ENCODE measurements at regions of chr4 and their contacts with region 1.

Region 1: GRCh38 chr4:83535520-83536361 is at the start of gene GPAT3:
- DNase-seq: peak; percentile 78 to 86
- ATAC-seq: peak; percentile 90 to 94
- H3K4me3 ChIP-seq: peak within 1 kb of the TSS; percentile 81
- H3K27ac ChIP-seq: peak within 1 kb of the TSS; percentile 90 to 96
- H3K4me1 ChIP-seq: peaks cover 23% of the 10 kb centered on the region; the same call in 2 of the 3 replicates
- CTCF ChIP-seq: no peak
- EP300 ChIP-seq: peak in 1 of 2 experiments; percentile 46; a peak in 2 of 5 replicates
- POLR2A ChIP-seq: no peak; the same call in none of the 2 replicates
- RAD21 ChIP-seq: no peak; a peak in 1 of 5 replicates
- polyA plus RNA-seq, gene GPAT3: 29.9 and 44.9 TPM in 2 replicates

Region 2: DNA sequence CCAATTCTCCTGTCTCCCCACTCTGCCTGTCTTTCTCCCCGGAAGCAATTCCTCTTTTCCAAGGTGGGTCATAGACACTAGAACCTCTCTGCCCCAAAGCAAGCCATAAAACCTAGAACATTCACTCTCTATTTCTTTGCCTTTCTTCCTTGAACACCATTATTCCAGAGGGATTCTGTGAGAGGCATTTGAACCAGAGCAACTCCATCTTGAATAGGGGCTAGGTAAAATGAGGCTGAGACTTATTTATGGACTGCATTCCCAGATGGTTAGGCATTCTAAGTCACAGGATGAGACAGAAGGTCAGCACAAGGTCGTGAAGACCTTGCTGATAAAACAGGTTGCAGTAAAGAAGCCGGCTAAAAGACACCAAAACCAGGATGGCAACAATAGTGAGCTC is 13.5 kb before region 1 on chr4:
- CTCF ChIA-PET with region 1: interaction called, 10 read pairs
- POLR2A ChIA-PET with region 1: no interaction called
- DNase-seq: no peak
- ATAC-seq: no peak
- H3K4me3 ChIP-seq: no peak overlapping the region
- H3K27ac ChIP-seq: no peak overlapping the region
- H3K4me1 ChIP-seq: no peaks in the 10 kb centered on the region
- CTCF ChIP-seq: no peak
- EP300 ChIP-seq: no peak
- POLR2A ChIP-seq: no peak
- RAD21 ChIP-seq: no peak

Region 3: DNA sequence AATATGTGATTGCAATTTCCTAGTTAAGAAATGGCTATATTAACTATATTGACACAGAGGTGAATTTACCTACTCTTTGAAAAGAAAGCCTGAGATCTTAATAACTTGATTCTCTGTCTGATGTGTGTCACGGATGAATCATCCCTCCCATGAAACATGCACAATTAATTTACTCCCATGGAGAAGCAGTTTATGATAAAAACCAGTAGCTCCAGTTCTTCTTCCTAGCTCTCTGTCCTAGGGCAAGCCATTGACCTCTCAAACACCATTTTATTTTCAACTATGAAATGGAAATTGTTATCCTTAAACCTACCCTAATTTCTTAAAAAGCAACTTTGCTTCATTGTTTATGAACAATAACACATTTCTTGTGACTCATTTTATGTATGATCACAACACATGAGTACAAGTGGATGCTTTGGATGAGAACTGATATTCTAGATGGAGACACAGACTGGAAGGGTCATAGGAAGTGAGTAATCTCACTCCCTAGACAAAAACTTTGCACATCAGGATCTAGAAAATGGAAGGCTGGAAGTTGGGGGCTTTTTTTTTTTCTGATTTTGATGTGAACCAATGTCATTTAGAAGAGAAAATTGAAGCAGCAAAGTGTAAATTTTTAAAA is 438.5 kb after region 1 on chr4:
- CTCF ChIA-PET with region 1: no interaction called
- POLR2A ChIA-PET with region 1: no interaction called
- DNase-seq: no peak
- ATAC-seq: no peak
- H3K4me3 ChIP-seq: no peak overlapping the region
- H3K27ac ChIP-seq: no peak overlapping the region
- H3K4me1 ChIP-seq: no peaks in the 10 kb centered on the region
- CTCF ChIP-seq: no peak
- EP300 ChIP-seq: no peak
- POLR2A ChIP-seq: no peak
- RAD21 ChIP-seq: no peak